Endothelial cell of umbilical vein (primary cell): ENCODE measurements at regions of chr1 and their contacts with region 1.

Region 1: GRCh38 chr1:115764541-115764940 is 4.0 kb downstream of the CASQ2 start:
- DNase-seq: peak; percentile 20
- H3K4me3 ChIP-seq: no peak overlapping the region
- H3K27ac ChIP-seq: no peak overlapping the region
- H3K4me1 ChIP-seq: no peaks in the 10 kb centered on the region
- H3K27me3 ChIP-seq: peaks cover 0 to 3% of the 10 kb centered on the region in 2 experiments
- CTCF ChIP-seq: peak in 1 of 2 donors; percentile 28
- POLR2A ChIP-seq: no peak

Region 2: DNA sequence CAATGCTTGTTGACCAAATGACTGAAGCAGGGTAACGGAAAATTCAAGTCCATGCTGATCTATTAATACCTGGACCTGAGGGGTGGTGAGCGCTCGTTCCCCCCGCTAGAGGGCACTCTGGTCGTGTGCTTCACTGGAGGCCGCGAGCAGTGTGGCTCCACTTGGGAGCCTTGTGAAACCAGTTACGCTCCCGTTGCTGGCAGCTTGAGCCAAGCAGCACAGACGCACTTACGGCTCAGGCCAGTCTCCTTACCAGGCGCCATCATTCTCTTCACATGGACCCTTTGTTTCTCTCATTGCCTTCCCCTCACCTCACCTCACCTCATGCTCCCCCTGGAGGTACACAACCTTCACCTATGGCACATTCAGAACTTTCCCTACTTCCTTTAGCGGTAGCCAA is 625.6 kb before region 1 on chr1:
- CTCF ChIA-PET with region 1: interaction called, 3 read pairs
- POLR2A ChIA-PET with region 1: no interaction called
- dilution Hi-C with region 1: no loop called
- intact Hi-C with region 1: loop called (anchors 2 kb)
- DNase-seq: peak; percentile 79
- H3K4me3 ChIP-seq: no peak overlapping the region
- H3K27ac ChIP-seq: no peak overlapping the region
- H3K4me1 ChIP-seq: no peaks in the 10 kb centered on the region
- H3K27me3 ChIP-seq: peaks cover 0 to 2% of the 10 kb centered on the region in 2 experiments
- CTCF ChIP-seq: peak; percentile 90 to 92
- POLR2A ChIP-seq: no peak

Region 3: DNA sequence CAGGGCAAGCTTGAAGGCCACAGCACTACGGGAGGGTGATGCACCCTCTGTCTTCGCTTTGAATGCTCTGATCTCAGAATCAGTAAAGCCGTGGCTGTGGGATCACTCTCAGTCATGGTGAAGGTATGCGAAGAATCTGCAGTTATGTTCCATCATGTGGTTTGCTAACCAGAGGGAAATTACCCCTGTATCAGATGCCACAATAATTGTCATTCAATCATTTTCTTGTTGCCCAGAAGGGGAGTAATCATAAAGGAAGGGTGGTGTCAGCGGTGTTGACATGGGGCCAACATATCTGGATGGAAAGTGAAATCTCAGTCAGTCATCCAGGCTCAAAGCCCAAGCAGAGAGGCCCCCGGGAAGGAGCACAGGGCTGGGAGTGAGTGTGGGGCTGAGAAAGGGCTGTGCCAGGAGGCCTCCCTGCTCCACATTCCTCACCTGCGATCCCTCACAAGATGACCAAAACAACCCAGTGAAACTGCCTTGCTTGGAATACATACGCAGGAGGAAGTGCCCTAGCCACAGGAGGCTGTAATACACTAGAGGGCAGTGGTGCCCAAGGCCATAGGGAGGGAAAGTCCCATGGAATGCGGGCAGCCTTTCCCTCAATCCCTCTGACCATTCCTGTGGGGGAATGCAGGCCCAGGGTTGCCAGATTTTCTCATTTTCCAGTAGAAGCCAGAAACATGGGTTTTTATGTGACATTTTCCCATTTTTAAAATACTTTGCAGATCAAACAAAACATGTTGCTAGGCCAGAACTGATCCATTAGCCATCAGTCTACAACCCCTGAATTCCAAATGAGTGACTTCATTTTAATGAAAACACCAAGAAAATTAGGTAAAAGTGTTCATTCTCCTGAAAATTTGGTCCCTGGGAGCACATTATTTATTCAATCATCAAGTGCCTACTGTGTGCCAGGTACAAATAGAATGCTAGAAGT is 218.5 kb before region 1 on chr1:
- CTCF ChIA-PET with region 1: no interaction called
- POLR2A ChIA-PET with region 1: no interaction called
- dilution Hi-C with region 1: no loop called
- intact Hi-C with region 1: loop called (anchors 10 kb)
- DNase-seq: peak; percentile 56
- H3K4me3 ChIP-seq: no peak overlapping the region
- H3K27ac ChIP-seq: peak overlapping the region; percentile 6
- H3K4me1 ChIP-seq: peaks cover 6% of the 10 kb centered on the region
- H3K27me3 ChIP-seq: peaks cover 0 to 2% of the 10 kb centered on the region in 2 experiments
- CTCF ChIP-seq: peak; percentile 54 to 61
- POLR2A ChIP-seq: no peak

Region 4: GRCh38 chr1:115609021-115609420 is 155.5 kb before region 1 on chr1:
- CTCF ChIA-PET with region 1: interaction called, 125 read pairs
- POLR2A ChIA-PET with region 1: no interaction called
- dilution Hi-C with region 1: no loop called
- intact Hi-C with region 1: loop called (anchors 2 kb)
- DNase-seq: no peak
- H3K4me3 ChIP-seq: no peak overlapping the region
- H3K27ac ChIP-seq: no peak overlapping the region
- H3K4me1 ChIP-seq: no peaks in the 10 kb centered on the region
- H3K27me3 ChIP-seq: peaks cover 2 to 3% of the 10 kb centered on the region in 2 experiments
- CTCF ChIP-seq: no peak
- POLR2A ChIP-seq: no peak

Region 5: DNA sequence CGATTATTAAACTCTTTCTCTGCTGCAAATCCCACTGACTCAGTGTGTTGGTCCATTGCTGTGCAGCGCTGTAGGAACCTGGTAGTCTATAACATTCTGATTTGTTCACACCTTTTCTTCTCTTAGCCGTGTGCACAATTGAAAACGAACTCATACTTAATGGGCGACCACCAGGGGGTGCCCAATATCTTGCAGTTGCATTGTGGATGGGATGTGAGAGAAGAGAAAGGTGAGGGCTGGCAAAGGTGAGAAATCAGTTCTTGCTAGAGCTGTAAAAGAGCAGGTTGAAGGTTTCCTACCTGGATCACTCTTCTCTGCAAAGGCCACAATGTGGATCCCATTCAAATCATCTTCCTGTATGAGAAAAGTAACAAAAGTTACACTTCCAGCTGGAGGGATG is 47.0 kb before region 1 on chr1:
- CTCF ChIA-PET with region 1: interaction called, 8 read pairs
- POLR2A ChIA-PET with region 1: no interaction called
- dilution Hi-C with region 1: no loop called
- intact Hi-C with region 1: loop called (anchors 1 kb)
- DNase-seq: peak; percentile 30
- H3K4me3 ChIP-seq: no peak overlapping the region
- H3K27ac ChIP-seq: no peak overlapping the region
- H3K4me1 ChIP-seq: no peaks in the 10 kb centered on the region
- H3K27me3 ChIP-seq: peaks cover 2 to 16% of the 10 kb centered on the region in 2 experiments
- CTCF ChIP-seq: peak; percentile 41 to 56
- POLR2A ChIP-seq: no peak

Region 6: GRCh38 chr1:115744646-115745275 is 19.8 kb before region 1 on chr1:
- CTCF ChIA-PET with region 1: no interaction called
- POLR2A ChIA-PET with region 1: no interaction called
- dilution Hi-C with region 1: no loop called
- intact Hi-C with region 1: no loop called
- DNase-seq: no peak
- H3K4me3 ChIP-seq: no peak overlapping the region
- H3K27ac ChIP-seq: no peak overlapping the region
- H3K4me1 ChIP-seq: no peaks in the 10 kb centered on the region
- H3K27me3 ChIP-seq: no peaks in the 10 kb centered on the region
- CTCF ChIP-seq: no peak
- POLR2A ChIP-seq: no peak

Region 7: DNA sequence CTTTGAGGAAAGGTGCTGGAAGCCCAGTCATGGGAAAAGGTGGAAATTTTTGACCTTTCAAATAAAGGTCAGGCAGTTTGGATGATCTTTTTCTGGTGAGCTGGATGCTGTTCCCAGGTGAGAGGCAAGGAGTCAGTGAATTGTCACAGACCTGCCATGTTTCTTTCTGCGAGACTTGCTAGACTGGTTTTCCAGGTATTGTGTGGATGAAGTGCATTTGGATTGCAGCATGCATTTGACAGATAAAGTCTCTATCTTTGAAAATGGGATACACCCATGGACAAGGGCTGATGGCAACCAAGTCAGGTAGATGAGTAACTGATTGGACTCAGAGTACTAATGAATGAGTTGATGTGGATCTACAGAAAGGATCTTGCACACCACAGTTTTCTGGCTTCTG is 142.1 kb after region 1 on chr1:
- CTCF ChIA-PET with region 1: no interaction called
- POLR2A ChIA-PET with region 1: no interaction called
- dilution Hi-C with region 1: no loop called
- intact Hi-C with region 1: no loop called
- DNase-seq: no peak
- H3K4me3 ChIP-seq: no peak overlapping the region
- H3K27ac ChIP-seq: no peak overlapping the region
- H3K4me1 ChIP-seq: no peaks in the 10 kb centered on the region
- H3K27me3 ChIP-seq: no peaks in the 10 kb centered on the region
- CTCF ChIP-seq: no peak
- POLR2A ChIP-seq: no peak